GM12878 (cell line): ENCODE measurements at regions of chr17 and their contacts with region 1.

Region 1: DNA sequence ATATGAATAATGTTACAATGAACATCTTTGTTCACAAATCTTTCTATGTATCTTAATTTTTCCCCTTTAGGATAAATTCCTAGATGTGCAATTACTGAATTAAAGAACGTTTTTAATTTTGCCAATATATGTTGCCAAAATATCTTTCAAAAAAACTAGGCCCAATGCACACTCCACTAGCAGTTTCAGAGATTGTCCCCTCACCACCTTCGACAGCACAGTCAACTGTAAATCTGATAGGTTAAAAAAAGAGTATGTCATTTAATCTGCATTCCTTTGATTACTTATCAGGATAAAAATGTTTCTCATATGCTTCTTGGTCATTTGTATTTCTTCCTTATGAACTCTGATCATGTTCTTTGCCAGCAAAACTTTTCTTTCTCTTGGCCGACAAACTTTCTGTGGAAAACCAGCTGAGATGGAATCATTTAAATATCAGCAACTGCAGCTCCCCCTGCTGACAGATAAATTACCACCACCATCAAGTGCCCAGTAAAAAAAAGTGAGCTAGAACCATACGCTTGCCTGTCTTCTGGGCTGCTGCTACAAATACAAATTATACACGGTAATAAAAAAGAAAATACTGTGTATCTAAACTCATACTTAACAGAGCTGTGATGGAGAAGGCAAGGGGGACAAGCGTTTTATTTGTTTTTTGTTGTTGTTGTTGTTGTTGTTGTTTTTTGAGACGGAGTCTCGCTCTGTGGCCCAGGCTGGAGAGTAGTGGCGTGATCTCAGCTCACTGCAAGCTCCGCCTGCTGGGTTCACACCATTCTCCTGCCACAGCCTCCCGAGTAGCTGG is 19.6 kb upstream of the KANSL1 start:
- DNase-seq: no peak
- ATAC-seq: peak; percentile 89
- H3K4me3 ChIP-seq: no peak overlapping the region
- H3K27ac ChIP-seq: no peak overlapping the region
- H3K4me1 ChIP-seq: no peaks in the 10 kb centered on the region
- H3K27me3 ChIP-seq: no peaks in the 10 kb centered on the region
- CTCF ChIP-seq: peak; percentile 77 to 93 (median 89)
- EP300 ChIP-seq: no peak
- POLR2A ChIP-seq: no peak
- RAD21 ChIP-seq: peak; percentile 91

Region 2: GRCh38 chr17:46002311-46002972 is 210.4 kb before region 1 on chr17:
- CTCF ChIA-PET with region 1: interaction called, 65 read pairs
- POLR2A ChIA-PET with region 1: interaction called, 3 read pairs
- RAD21 ChIA-PET with region 1: interaction called, 13 read pairs
- SMC1A ChIA-PET with region 1: interaction called, 26 read pairs
- in situ Hi-C with region 1: loop called (anchors 5 kb)
- intact Hi-C with region 1: loop called (anchors 1 kb)
- DNase-seq: peak; percentile 16
- ATAC-seq: peak; percentile 96
- H3K4me3 ChIP-seq: no peak overlapping the region
- H3K27ac ChIP-seq: no peak overlapping the region
- H3K4me1 ChIP-seq: no peaks in the 10 kb centered on the region
- H3K27me3 ChIP-seq: no peaks in the 10 kb centered on the region
- CTCF ChIP-seq: peak; percentile 86 to 93 (median 87); a peak in 5 of 6 replicates
- EP300 ChIP-seq: no peak
- POLR2A ChIP-seq: no peak
- RAD21 ChIP-seq: peak; percentile 89

Region 3: GRCh38 chr17:46044286-46044928 is 168.4 kb before region 1 on chr17:
- CTCF ChIA-PET with region 1: interaction called, 94 read pairs
- POLR2A ChIA-PET with region 1: interaction called, 6 read pairs
- RAD21 ChIA-PET with region 1: interaction called, 20 read pairs
- SMC1A ChIA-PET with region 1: interaction called, 30 read pairs
- in situ Hi-C with region 1: no loop called
- intact Hi-C with region 1: loop called (anchors 1 kb)
- DNase-seq: no peak
- ATAC-seq: peak; percentile 76
- H3K4me3 ChIP-seq: no peak overlapping the region
- H3K27ac ChIP-seq: no peak overlapping the region
- H3K4me1 ChIP-seq: no peaks in the 10 kb centered on the region
- H3K27me3 ChIP-seq: no peaks in the 10 kb centered on the region
- CTCF ChIP-seq: peak; percentile 67 to 80 (median 76)
- EP300 ChIP-seq: no peak
- POLR2A ChIP-seq: no peak
- RAD21 ChIP-seq: peak; percentile 75

Region 4: DNA sequence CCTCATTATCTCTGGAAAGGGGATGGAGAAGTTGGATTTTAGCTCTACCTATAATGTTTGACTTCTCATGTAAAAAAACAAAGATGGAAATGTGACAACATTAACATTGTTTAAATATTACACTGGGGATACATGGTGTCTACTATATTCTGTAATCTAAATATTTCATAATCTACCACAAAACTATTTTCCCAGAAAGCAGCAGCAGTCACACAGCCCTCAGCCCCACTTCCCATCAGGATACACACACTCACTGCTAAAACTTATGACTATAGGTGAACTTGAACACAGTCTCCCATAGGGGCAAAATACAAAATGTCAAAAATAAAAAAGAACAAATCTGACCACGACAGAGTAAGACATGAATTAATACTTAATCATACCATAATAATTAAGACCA is 115.3 kb before region 1 on chr17:
- CTCF ChIA-PET with region 1: interaction called, 15 read pairs
- POLR2A ChIA-PET with region 1: interaction called, 3 read pairs
- RAD21 ChIA-PET with region 1: interaction called, 3 read pairs
- SMC1A ChIA-PET with region 1: interaction called, 3 read pairs
- in situ Hi-C with region 1: no loop called
- intact Hi-C with region 1: no loop called
- DNase-seq: no peak
- ATAC-seq: no peak
- H3K4me3 ChIP-seq: no peak overlapping the region
- H3K27ac ChIP-seq: no peak overlapping the region
- H3K4me1 ChIP-seq: peaks cover 19% of the 10 kb centered on the region; the same call in 1 of the 2 replicates
- H3K27me3 ChIP-seq: no peaks in the 10 kb centered on the region
- CTCF ChIP-seq: no peak
- EP300 ChIP-seq: no peak
- POLR2A ChIP-seq: no peak
- RAD21 ChIP-seq: no peak

Region 5: GRCh38 chr17:46154151-46154816 is 58.6 kb before region 1 on chr17:
- CTCF ChIA-PET with region 1: interaction called, 10 read pairs
- POLR2A ChIA-PET with region 1: no interaction called
- RAD21 ChIA-PET with region 1: interaction called, 5 read pairs
- SMC1A ChIA-PET with region 1: interaction called, 12 read pairs
- in situ Hi-C with region 1: no loop called
- intact Hi-C with region 1: no loop called
- DNase-seq: no peak
- ATAC-seq: no peak
- H3K4me3 ChIP-seq: no peak overlapping the region
- H3K27ac ChIP-seq: peak overlapping the region; percentile 29
- H3K4me1 ChIP-seq: peaks cover 90% of the 10 kb centered on the region
- H3K27me3 ChIP-seq: no peaks in the 10 kb centered on the region
- CTCF ChIP-seq: no peak
- EP300 ChIP-seq: no peak
- POLR2A ChIP-seq: no peak
- RAD21 ChIP-seq: no peak

Region 6: DNA sequence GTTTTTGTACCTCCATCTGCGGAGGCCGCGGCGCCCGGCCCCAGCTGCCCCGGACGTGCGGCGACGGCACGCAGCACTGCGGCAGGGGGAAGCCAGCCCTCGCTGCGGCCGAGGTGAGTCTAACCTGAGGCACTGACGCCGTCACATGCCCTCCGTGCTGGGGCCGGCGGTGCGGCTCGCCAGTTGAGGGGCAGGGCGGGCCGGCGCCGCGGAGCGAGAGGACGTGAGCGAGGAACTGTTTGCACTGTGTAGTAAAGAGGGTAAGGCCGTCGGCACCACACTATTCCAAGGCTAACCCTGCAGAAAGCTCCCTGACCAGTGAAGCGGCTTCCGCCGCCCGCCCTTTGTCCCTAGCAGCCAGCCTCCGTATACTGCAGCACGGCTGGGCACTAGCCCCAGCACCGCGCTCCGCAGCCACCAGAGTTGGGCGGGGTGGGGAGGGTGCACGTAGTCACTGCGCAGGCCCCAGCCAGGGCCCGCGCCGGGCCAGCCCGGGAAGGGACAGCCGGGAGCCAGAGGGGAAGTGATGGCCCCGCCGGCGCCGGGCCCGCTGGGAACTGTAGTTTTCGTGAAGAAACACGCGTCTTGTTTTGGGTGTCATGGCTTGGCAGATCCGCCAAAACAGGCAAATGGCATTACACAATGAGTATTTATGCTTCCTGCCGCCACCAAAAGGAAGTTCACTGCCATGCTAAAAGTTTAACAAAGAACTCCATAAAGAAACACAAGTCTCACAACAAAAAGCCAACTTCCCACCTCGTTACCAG is 19.0 kb before region 1 on chr17:
- CTCF ChIA-PET with region 1: interaction called, 152 read pairs
- POLR2A ChIA-PET with region 1: interaction called, 6 read pairs
- RAD21 ChIA-PET with region 1: interaction called, 23 read pairs
- SMC1A ChIA-PET with region 1: interaction called, 68 read pairs
- in situ Hi-C with region 1: no loop called
- intact Hi-C with region 1: no loop called
- DNase-seq: peak; percentile 88
- ATAC-seq: peak; percentile 90
- H3K4me3 ChIP-seq: peak overlapping the region; percentile 87
- H3K27ac ChIP-seq: peak overlapping the region; percentile 98
- H3K4me1 ChIP-seq: peaks cover 32% of the 10 kb centered on the region
- H3K27me3 ChIP-seq: no peaks in the 10 kb centered on the region
- CTCF ChIP-seq: peak in 2 of 3 experiments; percentile 13 to 26; a peak in 3 of 6 replicates
- EP300 ChIP-seq: peak in 1 of 2 experiments; percentile 7; a peak in 1 of 4 replicates
- POLR2A ChIP-seq: peak; percentile 85
- RAD21 ChIP-seq: no peak